Heart left ventricle (tissue), 16 donors: ENCODE measurements at regions of chr6 and their contacts with region 1.

Region 1: DNA sequence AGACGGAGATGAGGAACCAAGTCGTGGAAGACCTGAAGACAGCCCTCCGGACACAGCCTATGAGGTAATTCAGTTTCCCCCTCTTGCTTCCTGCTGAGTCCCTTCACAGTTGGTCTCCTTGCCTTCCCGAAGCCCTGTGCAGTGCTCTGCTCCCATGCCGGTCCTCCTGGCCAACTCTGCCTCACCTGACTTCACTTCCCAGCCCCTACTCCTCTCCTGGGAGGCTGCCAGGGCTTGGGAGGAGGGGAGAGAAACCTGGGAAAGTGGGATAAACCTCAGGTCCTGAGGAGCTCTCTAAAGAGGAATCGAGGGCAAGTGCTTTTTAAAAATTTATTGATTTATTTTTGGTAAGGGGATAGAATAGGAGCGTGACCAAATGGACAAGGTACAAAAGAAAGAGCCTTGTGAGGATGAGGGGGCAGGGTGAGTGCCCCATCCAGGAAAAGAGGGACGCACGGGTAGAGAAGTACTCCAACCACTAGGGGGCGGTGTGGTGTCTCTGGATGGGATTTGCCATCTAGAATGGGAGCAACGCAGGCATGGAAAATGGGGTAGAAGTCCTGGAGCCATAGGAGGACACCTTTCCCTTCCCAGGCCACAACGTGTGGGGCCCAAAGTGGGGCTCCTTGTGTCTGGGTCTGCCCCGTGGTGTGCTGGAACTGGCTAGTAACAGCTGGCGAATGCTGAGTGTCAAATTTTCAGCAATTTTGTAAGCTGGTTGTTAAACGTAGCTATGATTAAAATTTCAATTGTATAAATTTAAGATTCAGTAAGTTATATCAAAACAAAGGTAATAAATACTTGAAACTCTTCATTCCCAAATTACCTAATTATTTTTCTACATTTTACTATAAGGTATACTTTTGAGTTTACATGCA is 69.0 kb downstream of the MOCS1 start:
- DNase-seq: peak; percentile 65 to 76 (median 73)
- ATAC-seq: peak in 3 of 4 donors; percentile 51 to 67 (median 60)
- H3K4me3 ChIP-seq: no peak overlapping the region
- H3K27ac ChIP-seq: no peak overlapping the region
- H3K4me1 ChIP-seq: peaks cover 0 to 16% (median 0%) of the 10 kb centered on the region in 12 donors
- H3K27me3 ChIP-seq: no peaks in the 10 kb centered on the region
- CTCF ChIP-seq: peak; percentile 57 to 87 (median 80)
- POLR2A ChIP-seq: no peak

Region 2: GRCh38 chr6:39530201-39530759 is 335.0 kb before region 1 on chr6:
- intact Hi-C with region 1: no loop called
- DNase-seq: no peak
- ATAC-seq: peak in 2 of 4 donors; percentile 51 to 63
- H3K4me3 ChIP-seq: peak overlapping the region in 4 of 12 donors; percentile 20 to 37 (median 25)
- H3K27ac ChIP-seq: peak overlapping the region in 3 of 12 donors; percentile 19 to 36 (median 19)
- H3K4me1 ChIP-seq: peaks cover 0 to 12% (median 0%) of the 10 kb centered on the region in 12 donors
- H3K27me3 ChIP-seq: no peaks in the 10 kb centered on the region
- CTCF ChIP-seq: no peak
- POLR2A ChIP-seq: no peak

Region 3: DNA sequence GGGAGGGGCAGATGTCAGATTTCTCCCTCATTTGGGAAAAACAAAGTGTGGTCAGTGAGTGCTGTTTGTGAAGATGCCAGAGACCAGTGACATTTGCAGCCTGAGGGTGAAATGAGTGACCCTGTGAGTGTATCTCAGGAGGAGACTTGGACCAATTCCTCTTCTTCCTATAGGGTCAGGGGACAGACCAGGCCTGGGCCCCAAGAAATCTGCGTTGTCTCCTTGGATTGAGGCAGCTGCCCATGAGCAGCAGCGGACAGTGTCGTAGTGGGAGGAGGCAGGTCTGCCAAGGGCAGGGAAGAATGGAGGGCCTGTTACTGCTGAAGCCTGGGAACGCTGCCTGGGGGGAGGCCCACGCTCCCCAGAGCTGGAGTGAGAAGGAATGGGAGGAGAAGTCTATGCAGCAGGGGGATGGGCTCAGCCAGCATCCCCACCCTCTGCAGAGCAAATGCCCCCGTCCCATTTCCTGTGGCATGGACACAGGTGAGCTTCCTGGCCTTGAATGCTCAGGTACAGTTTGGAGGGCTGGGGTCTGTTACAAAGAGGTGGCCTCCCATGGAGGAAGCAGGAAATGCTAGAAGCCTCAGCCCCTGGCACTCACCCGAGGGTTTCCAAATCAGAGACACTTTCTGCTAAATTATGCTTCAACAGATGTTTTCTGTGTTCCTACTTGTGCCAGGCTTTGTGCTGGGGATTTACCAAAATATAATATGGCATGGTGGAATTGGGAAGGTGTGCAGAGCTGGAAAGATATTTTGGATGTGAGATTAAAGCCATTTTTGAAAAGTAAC is 43.3 kb before region 1 on chr6:
- intact Hi-C with region 1: loop called in 1 of 10 experiments (anchors 5 kb)
- DNase-seq: peak in 4 of 5 donors; percentile 60 to 74 (median 63)
- ATAC-seq: peak; percentile 5 to 64 (median 60)
- H3K4me3 ChIP-seq: peak overlapping the region in 10 of 12 donors; percentile 0 to 46 (median 41)
- H3K27ac ChIP-seq: peak overlapping the region; percentile 47 to 83 (median 76)
- H3K4me1 ChIP-seq: peaks cover 0 to 70% (median 30%) of the 10 kb centered on the region in 12 donors
- H3K27me3 ChIP-seq: no peaks in the 10 kb centered on the region
- CTCF ChIP-seq: no peak
- POLR2A ChIP-seq: no peak